RWPE1 (cell line): ENCODE measurements at regions of chr5 and their contacts with region 1.

Region 1: GRCh38 chr5:160064995-160065630 is 54.1 kb downstream of the PWWP2A start:
- DNase-seq: peak; percentile 89
- H3K27ac ChIP-seq: no peak overlapping the region
- CTCF ChIP-seq: no peak

Region 2: DNA sequence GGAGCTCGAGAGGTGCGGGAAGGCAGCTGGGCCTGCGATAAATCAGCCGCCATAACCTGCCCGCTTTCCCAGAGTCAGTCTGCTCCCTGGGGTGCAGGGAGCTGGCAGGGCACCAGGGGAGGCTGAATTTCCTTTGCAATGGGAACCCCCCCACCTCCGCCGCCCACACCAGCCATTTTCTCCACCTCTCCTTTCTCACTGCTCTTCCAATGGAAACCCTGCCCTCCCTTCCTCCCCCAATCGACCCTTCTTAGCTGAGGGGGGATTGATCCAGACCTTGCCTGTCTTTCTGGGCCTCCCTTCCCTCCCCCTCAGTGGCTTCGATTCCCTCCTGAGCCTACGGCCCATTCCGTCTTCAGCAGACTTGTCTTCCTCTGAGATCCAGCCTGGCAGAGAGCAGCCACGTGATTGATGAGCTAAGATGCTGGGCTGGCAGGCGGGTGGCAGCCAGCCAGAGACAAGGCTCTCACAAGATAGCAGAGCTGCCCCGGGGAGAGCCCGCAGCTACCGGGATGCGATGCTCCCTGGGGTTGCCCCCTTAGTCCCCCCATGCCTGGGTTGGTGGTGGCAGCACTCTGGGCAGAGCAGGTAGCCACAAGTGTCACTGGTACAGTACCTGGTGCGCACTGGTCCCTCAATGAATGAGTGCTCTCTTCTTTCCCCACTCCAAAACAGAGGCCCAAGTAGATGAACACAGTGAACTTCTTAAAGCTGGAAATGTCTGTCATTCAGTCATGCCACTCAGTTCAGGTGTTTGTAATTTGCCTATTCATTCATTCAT is 110.5 kb after region 1 on chr5:
- CTCF ChIA-PET with region 1: no interaction called
- POLR2A ChIA-PET with region 1: no interaction called
- DNase-seq: no peak
- H3K27ac ChIP-seq: no peak overlapping the region
- CTCF ChIP-seq: no peak

Region 3: DNA sequence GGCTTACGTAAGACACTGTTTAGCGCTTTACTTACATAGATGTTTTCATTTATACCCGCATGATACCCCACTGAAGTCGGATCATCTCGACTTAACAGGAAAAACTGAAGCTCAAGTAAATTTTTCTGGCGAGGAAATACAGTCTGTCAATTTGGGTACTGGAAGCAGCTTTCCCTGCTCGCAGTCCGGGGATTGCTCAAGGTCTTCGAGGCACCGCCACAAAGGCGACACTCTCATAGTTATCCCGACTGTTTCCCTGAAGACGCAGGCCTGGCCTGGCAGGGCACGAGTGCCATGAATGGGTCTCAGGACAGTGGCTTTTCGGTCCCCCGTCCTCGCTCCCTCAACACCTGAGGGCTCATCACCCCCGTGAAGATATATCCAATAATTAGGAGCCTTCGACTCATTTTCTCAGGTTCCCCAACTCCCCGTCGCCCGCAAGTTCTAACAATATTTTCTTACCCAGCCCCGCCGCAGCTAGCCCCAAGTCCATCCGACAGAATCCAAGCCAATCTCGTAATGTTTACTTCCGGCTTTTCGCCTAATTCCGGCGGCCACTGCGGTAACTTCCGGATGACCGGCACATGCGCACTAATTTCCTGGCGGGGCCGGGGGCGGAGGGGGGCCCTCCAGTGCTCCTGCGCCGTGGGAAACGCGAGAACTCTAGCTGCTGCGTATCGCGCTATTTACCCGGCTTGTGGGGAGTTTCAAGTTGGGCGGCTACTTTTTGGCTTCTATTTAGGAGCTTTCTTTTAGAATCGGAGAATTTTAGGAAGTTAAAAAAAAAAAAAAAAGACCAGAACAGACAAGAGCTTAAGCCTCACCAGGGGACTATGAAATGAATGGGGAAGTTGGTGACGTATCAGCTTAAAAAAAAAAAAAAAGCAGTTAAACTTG is 353.7 kb after region 1 on chr5 and contains the start of gene SLU7:
- CTCF ChIA-PET with region 1: no interaction called
- POLR2A ChIA-PET with region 1: interaction called, 12 read pairs
- DNase-seq: peak; percentile 99
- H3K27ac ChIP-seq: peak within 1 kb of the TSS; percentile 76
- CTCF ChIP-seq: no peak